Heart left ventricle (tissue), 16 donors: ENCODE measurements at regions of chr1 and their contacts with region 1.

Region 1: DNA sequence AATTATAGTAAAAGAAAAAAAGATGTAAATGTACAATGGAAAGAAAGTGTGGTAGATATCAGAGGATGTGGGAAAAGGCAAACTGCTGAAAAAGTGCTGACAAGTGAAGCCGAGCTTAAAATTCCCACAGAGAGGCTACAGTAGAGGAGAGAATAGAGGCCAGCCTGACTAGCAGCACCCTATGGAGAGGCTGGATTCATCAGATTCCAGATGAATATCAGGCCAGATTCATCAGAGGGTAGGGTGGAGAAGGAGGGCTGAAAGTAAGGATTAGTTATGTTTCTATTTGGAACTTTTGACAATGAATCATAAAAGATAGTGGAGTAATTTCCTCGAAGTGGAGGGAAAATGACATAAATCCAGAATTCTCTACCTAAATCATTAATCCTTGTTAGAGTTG is 60.4 kb upstream of the NEK7 start:
- DNase-seq: no peak
- ATAC-seq: no peak
- H3K4me3 ChIP-seq: no peak overlapping the region
- H3K27ac ChIP-seq: no peak overlapping the region
- H3K4me1 ChIP-seq: no peaks in the 10 kb centered on the region
- H3K27me3 ChIP-seq: no peaks in the 10 kb centered on the region
- CTCF ChIP-seq: no peak
- POLR2A ChIP-seq: no peak

Region 2: GRCh38 chr1:198143797-198144196 is 47.4 kb after region 1 on chr1:
- intact Hi-C with region 1: loop called in 1 of 10 experiments (anchors 10 kb)
- DNase-seq: no peak
- ATAC-seq: no peak
- H3K4me3 ChIP-seq: no peak overlapping the region
- H3K27ac ChIP-seq: no peak overlapping the region
- H3K4me1 ChIP-seq: no peaks in the 10 kb centered on the region
- H3K27me3 ChIP-seq: no peaks in the 10 kb centered on the region
- CTCF ChIP-seq: no peak
- POLR2A ChIP-seq: no peak

Region 3: GRCh38 chr1:198199105-198199504 is 102.7 kb after region 1 on chr1:
- intact Hi-C with region 1: loop called in 1 of 10 experiments (anchors 10 kb)
- DNase-seq: no peak
- ATAC-seq: no peak
- H3K4me3 ChIP-seq: no peak overlapping the region
- H3K27ac ChIP-seq: no peak overlapping the region
- H3K4me1 ChIP-seq: peaks cover 0 to 82% (median 43%) of the 10 kb centered on the region in 12 donors
- H3K27me3 ChIP-seq: no peaks in the 10 kb centered on the region
- CTCF ChIP-seq: no peak
- POLR2A ChIP-seq: no peak